ENCODE measurements at regions of chr15 and their contacts with region 1.

Region 1: DNA sequence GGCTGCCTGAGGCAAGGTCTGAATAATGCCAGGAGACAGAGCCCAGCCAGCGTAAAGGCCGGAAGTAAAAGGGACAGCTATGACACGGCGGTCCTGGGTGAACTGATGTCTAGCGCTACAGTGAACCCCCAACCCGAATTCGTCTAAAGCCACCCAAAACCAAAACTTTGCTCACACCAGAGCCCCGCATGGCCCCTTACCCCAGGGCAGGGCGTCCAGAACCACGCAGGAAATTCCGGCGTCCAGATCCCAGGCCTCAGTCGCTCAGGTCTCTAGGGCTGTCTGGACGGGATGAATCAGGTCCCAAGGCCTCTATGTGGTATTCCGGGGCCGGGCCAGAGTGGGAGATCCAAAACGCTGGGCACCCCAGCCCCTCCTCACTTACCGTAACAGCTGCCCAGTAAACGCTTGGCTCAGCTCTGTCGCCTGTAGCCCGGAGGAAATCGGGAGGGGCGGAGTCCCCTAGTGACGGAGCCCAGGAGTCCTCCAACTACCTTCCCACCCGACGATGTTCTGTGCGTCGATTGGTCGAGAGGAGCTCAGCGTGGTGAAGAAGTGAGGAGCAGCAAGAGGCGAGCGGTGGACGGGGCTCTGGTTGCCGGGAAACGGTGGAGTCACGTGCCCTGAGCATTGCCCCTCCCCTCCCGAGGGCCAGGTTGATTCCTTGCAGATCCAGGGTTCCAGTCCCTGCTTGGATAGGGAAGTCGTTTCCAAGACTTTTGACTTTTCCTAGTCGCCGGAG is at the start of gene CCDC32:
- DNase-seq: peak; percentile 81
- ATAC-seq: peak; percentile 91
- H3K4me3 Mint-ChIP-seq: peak within 1 kb of the TSS; percentile 97
- H3K27ac Mint-ChIP-seq: peak within 1 kb of the TSS; percentile 94
- H3K4me1 Mint-ChIP-seq: peaks cover 71% of the 10 kb centered on the region
- H3K27me3 Mint-ChIP-seq: no peaks in the 10 kb centered on the region
- CTCF ChIP-seq: no peak
- total RNA-seq, gene CCDC32: 64.0 and 66.3 TPM in 2 replicates

Region 2: DNA sequence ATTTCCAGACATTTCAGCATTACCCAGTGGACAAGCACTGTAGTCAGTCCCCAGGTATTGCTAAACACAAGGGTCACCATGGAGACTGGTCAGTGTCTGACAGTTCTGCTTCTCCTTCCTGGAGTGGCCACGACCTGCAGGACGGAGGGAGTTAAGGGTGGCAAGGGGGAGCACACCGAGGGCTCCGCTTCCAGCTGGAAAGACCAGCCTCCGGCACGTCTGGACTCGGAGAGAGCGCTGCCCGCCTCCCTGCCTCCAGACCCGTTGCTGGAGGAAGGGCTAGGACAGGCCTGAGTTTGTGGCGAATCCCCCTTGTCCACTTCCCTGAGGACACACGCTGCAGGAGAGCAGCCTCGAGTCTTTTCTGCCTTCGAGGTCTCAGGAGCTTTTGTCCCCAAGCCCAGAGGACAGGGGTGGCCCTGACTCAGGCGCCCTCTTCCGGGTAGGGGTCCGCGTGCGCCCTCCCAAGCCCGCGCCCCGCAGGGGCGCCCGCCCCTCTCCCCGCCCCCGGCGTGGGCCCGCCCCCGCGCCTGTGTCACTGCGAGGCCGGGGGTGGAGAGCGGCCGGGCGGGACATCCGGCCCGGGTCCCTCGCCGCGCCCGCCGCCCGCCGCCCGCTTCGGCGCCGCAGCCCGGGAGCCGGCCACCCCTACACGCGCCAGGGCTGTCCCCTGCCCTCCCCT is 94.2 kb before region 1 on chr15 and contains the start of gene CHST14:
- CTCF ChIA-PET with region 1: no interaction called
- POLR2A ChIA-PET with region 1: interaction called, 10 read pairs
- intact Hi-C with region 1: loop called (anchors 2 kb)
- DNase-seq: peak; percentile 69
- ATAC-seq: peak; percentile 91
- H3K4me3 Mint-ChIP-seq: peak within 1 kb of the TSS; percentile 88
- H3K27ac Mint-ChIP-seq: peak within 1 kb of the TSS; percentile 77
- H3K4me1 Mint-ChIP-seq: peaks cover 10% of the 10 kb centered on the region
- H3K27me3 Mint-ChIP-seq: no peaks in the 10 kb centered on the region
- CTCF ChIP-seq: no peak
- total RNA-seq, gene CHST14: 10.1 and 10.2 TPM in 2 replicates

Region 3: GRCh38 chr15:40543631-40544294 is 21.0 kb before region 1 on chr15:
- CTCF ChIA-PET with region 1: no interaction called
- POLR2A ChIA-PET with region 1: interaction called, 5 read pairs
- intact Hi-C with region 1: loop called (anchors 1 kb)
- DNase-seq: no peak
- ATAC-seq: peak; percentile 92
- H3K4me3 Mint-ChIP-seq: peak overlapping the region; percentile 46
- H3K27ac Mint-ChIP-seq: peak overlapping the region; percentile 86
- H3K4me1 Mint-ChIP-seq: peaks cover 70% of the 10 kb centered on the region
- H3K27me3 Mint-ChIP-seq: no peaks in the 10 kb centered on the region
- CTCF ChIP-seq: no peak

Region 4: DNA sequence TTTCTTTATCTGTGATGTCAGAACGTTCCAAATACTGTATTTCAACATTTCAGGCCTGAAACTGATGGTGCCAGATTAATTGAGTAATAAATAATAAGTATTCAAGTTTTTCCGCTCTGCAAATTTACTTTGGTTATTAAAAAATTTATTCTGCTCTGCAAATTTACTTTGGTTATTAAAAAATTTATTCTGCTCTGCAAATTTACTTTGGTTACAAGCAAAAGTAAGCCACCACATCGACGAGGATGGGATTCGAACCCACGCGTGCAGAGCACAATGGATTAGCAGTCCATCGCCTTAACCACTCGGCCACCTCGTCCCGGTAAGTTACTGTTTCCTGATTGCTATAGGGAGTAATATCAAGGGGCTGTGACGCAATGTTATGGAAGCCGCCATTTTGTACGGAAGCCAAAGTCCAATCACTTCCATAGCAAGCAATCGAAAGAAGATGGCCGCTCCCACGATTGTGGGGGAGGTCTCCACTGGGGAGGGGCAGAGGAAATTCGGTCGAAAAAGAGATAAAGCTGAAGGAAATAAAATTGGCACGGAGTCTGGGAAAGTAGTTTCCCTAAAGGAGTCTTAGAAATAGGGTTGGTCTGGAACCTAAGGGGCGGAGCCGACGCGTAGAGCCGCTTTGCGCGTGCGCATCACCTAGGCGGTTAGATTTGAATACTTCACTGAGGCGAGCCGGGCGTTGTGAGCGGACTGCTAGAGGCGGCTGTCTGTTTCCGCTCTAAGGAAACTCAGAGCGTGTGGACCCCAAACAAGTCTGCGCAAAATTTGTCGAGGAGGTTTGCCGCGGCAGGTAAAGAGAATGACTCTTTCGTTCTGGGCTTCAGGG is 29.0 kb after region 1 on chr15 and contains the start of gene KNL1:
- CTCF ChIA-PET with region 1: interaction called, 5 read pairs
- POLR2A ChIA-PET with region 1: interaction called, 22 read pairs
- intact Hi-C with region 1: loop called (anchors 1 kb)
- DNase-seq: peak; percentile 84
- ATAC-seq: peak; percentile 83
- H3K4me3 Mint-ChIP-seq: peak within 1 kb of the TSS; percentile 95
- H3K27ac Mint-ChIP-seq: peak within 1 kb of the TSS; percentile 99
- H3K4me1 Mint-ChIP-seq: peaks cover 21% of the 10 kb centered on the region
- H3K27me3 Mint-ChIP-seq: peaks cover 2% of the 10 kb centered on the region
- CTCF ChIP-seq: no peak
- total RNA-seq, gene KNL1: 5.1 and 7.7 TPM in 2 replicates

Region 5: GRCh38 chr15:40769274-40770146 is 204.7 kb after region 1 on chr15 and contains the start of gene C15orf62:
- CTCF ChIA-PET with region 1: no interaction called
- POLR2A ChIA-PET with region 1: interaction called, 15 read pairs
- intact Hi-C with region 1: loop called (anchors 5 kb)
- DNase-seq: peak; percentile 81
- ATAC-seq: peak; percentile 84
- H3K4me3 Mint-ChIP-seq: peak within 1 kb of the TSS; percentile 82
- H3K27ac Mint-ChIP-seq: peak within 1 kb of the TSS; percentile 93
- H3K4me1 Mint-ChIP-seq: peaks cover 59% of the 10 kb centered on the region
- H3K27me3 Mint-ChIP-seq: no peaks in the 10 kb centered on the region
- CTCF ChIP-seq: no peak
- total RNA-seq, gene C15orf62: 5.7 and 6.5 TPM in 2 replicates

Region 6: GRCh38 chr15:41331833-41332787 is 767.3 kb after region 1 on chr15 and contains the start of gene OIP5:
- CTCF ChIA-PET with region 1: no interaction called
- POLR2A ChIA-PET with region 1: no interaction called
- intact Hi-C with region 1: loop called (anchors 2 kb)
- DNase-seq: peak; percentile 88
- ATAC-seq: peak; percentile 94
- H3K4me3 Mint-ChIP-seq: peak within 1 kb of the TSS; percentile 100
- H3K27ac Mint-ChIP-seq: peak within 1 kb of the TSS; percentile 97
- H3K4me1 Mint-ChIP-seq: peaks cover 31% of the 10 kb centered on the region
- H3K27me3 Mint-ChIP-seq: no peaks in the 10 kb centered on the region
- CTCF ChIP-seq: no peak
- total RNA-seq, gene OIP5: 0.62 and 1.4 TPM in 2 replicates

Measured in activated B cell treated with CpG ODN at 0.5 μM for 24 hours (primary cell).